PC-9 (cell line): ENCODE measurements at regions of chr18 and their contacts with region 1.

Region 1: DNA sequence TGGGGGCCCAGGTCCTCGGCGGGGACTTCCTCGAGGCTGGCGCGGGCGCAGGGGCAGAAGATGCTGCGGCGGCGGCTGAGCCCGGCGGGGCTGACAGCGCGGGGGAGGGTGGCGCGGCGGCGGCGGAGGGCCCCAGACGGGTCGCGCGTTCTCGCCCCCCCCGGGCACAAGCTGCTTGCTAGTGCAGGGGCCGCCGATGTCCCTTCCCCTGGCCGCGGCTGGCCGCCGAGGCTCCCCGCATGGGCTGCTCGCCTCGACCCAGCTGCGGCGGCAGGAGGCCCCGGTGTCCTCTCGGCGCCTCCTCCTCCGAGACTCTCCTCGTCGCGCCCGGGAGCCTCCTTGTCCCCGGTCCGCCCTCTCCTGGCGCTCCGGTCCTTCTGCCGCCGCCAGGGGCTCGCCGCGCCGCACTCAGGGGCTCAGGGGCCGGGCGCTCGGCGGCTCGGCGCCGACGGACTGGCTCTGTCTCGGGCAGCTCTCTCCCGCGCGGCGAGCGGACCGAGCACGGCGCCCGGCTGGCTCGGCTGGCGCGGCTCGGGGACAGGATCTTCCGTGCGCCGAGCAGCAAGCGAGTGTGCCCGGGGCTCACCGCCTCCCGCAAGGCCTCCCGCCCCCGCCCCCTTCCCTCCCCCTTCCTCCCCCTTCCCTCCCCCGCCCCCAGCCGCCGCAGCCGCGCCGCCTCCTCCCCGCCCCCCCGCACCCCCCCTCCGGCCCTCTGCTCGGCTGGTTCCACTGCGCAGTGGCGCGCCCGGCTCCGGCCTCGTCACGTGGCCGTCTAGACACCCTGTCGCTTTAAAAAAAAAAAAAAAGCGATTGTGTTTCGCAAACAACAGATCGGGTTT is 902 bp upstream of the SMAD7 start:
- DNase-seq: peak; percentile 73 to 75
- H3K4me3 ChIP-seq: peak overlapping the region; percentile 78
- H3K27ac ChIP-seq: peak overlapping the region; percentile 94
- H3K4me1 ChIP-seq: peaks cover 53% of the 10 kb centered on the region
- H3K27me3 ChIP-seq: no peaks in the 10 kb centered on the region
- CTCF ChIP-seq: no peak

Region 2: DNA sequence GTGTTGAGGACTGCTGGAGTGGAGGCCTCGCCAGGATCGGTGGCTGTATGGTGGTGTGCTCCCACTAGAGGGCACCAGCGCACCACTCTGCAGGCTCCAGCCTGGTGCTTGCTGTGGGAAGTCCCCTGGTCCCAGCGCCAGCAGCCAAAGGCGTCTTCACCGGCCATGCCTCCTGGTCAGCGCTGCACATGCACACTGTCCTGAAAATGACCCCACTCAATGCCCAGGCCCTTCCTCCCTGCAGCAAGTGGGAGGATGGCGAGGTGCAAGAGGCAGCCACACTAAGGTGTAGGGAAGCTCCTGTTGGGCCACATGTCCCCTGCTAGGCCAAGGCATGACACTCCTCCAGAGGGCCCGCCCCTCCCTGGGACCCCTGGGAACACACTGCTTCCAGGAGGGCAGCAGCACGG is 276.3 kb before region 1 on chr18:
- CTCF ChIA-PET with region 1: no interaction called
- POLR2A ChIA-PET with region 1: no interaction called
- intact Hi-C with region 1: loop called (anchors 2 kb)
- DNase-seq: peak; percentile 68 to 71
- H3K4me3 ChIP-seq: no peak overlapping the region
- H3K27ac ChIP-seq: no peak overlapping the region
- H3K4me1 ChIP-seq: no peaks in the 10 kb centered on the region
- H3K27me3 ChIP-seq: no peaks in the 10 kb centered on the region
- CTCF ChIP-seq: peak; percentile 89

Region 3: DNA sequence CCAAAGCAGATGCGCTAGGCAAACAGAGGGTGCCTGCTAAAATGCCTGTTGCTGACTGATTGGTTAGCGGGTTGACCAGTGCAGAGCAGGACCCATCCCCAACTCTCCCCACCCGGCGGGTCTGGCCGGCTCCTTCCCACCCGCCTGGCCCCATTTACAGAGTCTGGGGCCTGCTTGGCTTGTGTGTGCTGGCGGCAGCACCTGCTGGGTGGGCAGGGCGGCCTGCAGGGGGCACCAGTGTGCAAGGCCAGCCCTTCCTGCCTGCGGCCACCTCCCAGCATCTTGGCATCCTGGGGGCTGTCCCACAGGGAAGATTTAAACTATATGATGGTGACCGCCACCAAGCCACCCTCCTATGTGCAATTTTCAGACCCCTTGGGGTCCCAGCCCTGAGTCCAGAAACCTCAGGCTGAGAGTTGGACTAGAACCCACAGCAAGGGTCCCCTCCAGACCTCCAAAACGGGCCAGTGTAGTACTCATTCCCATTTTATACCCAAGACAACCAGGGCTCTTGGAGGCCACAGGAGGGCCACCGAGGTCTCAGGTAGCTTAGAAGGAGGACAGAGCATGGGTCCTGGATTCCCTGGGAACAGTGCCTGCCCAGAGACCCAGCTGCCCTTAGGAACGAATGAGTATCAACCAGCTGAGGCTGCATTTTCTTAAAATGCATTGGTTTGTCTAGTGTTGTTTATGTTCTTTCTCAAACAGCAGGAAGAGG is 174.5 kb before region 1 on chr18:
- CTCF ChIA-PET with region 1: no interaction called
- POLR2A ChIA-PET with region 1: no interaction called
- intact Hi-C with region 1: loop called (anchors 5 kb)
- DNase-seq: peak in 1 of 2 experiments; percentile 58
- H3K4me3 ChIP-seq: no peak overlapping the region
- H3K27ac ChIP-seq: no peak overlapping the region
- H3K4me1 ChIP-seq: no peaks in the 10 kb centered on the region
- H3K27me3 ChIP-seq: no peaks in the 10 kb centered on the region
- CTCF ChIP-seq: peak; percentile 86

Region 4: GRCh38 chr18:48834413-48835031 is 117.1 kb before region 1 on chr18:
- CTCF ChIA-PET with region 1: no interaction called
- POLR2A ChIA-PET with region 1: interaction called, 3 read pairs
- intact Hi-C with region 1: loop called (anchors 2 kb)
- DNase-seq: peak; percentile 76 to 96
- H3K4me3 ChIP-seq: peak overlapping the region; percentile 40; the same call in 1 of the 2 replicates
- H3K27ac ChIP-seq: peak overlapping the region; percentile 78
- H3K4me1 ChIP-seq: peaks cover 71% of the 10 kb centered on the region
- H3K27me3 ChIP-seq: no peaks in the 10 kb centered on the region
- CTCF ChIP-seq: no peak

Region 5: DNA sequence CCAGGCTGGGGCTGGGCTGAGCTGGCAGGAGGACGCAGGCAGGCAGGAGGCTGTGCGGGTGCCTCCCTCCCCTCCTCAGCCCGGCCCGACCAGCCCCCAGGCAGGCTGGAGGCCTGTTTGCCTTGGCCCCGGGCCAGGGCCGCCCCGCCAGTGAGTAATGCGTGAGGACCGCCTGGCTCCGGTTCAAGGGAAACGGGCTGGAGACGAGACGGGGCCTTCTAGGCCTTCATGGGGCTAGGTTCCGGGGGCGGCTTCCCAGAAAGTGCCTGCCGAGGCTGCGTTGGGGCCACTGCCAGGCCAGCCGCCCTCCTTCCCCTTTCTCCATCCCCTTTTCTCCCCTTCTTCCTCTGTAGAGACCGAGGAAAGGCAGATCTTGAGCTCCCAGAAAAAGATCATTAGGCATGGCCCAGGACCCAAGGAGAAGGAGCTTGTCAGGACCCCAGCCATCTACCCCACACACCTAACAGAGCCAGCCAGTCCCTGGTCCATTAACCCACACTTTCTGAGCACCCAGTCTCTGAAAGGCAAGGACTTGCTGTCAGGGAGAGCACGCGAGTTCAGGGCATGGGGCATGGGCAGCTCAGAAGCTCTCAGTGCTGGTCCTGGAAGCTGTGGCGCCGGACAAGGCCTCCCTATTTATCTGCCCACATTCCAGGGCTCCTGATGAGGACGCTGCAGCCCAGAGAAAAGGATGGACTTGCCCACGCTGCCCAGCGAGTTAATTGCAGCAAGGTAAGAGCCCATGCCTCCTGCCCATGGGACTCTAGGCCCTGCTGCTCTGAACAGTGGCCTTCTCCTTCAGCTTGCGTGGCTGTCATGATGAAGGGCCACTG is 49.4 kb before region 1 on chr18:
- CTCF ChIA-PET with region 1: no interaction called
- POLR2A ChIA-PET with region 1: no interaction called
- intact Hi-C with region 1: loop called (anchors 2 kb)
- DNase-seq: peak; percentile 72 to 88
- H3K4me3 ChIP-seq: no peak overlapping the region
- H3K27ac ChIP-seq: no peak overlapping the region
- H3K4me1 ChIP-seq: peaks cover 38% of the 10 kb centered on the region
- H3K27me3 ChIP-seq: no peaks in the 10 kb centered on the region
- CTCF ChIP-seq: no peak

Region 6: GRCh38 chr18:48997985-48998831 is 46.5 kb after region 1 on chr18:
- CTCF ChIA-PET with region 1: interaction called, 3 read pairs
- POLR2A ChIA-PET with region 1: interaction called, 21 read pairs
- intact Hi-C with region 1: loop called (anchors 2 kb)
- DNase-seq: peak; percentile 91 to 98
- H3K4me3 ChIP-seq: peak overlapping the region; percentile 32; the same call in 1 of the 2 replicates
- H3K27ac ChIP-seq: peak overlapping the region; percentile 97
- H3K4me1 ChIP-seq: peaks cover 60% of the 10 kb centered on the region
- H3K27me3 ChIP-seq: no peaks in the 10 kb centered on the region
- CTCF ChIP-seq: no peak